Endothelial cell of umbilical vein (primary cell): ENCODE measurements at regions of chr13 and their contacts with region 1.

Region 1: GRCh38 chr13:59531571-59532091 is 632.1 kb downstream of the DIAPH3 start:
- DNase-seq: peak; percentile 98
- H3K4me3 ChIP-seq: no peak overlapping the region
- H3K27ac ChIP-seq: peak overlapping the region; percentile 73
- H3K4me1 ChIP-seq: peaks cover 40% of the 10 kb centered on the region
- H3K27me3 ChIP-seq: no peaks in the 10 kb centered on the region
- CTCF ChIP-seq: no peak
- POLR2A ChIP-seq: peak; percentile 68

Region 2: GRCh38 chr13:59269476-59269875 is 262.2 kb before region 1 on chr13:
- CTCF ChIA-PET with region 1: no interaction called
- POLR2A ChIA-PET with region 1: no interaction called
- dilution Hi-C with region 1: no loop called
- intact Hi-C with region 1: loop called (anchors 1 kb)
- DNase-seq: no peak
- H3K4me3 ChIP-seq: no peak overlapping the region
- H3K27ac ChIP-seq: no peak overlapping the region
- H3K4me1 ChIP-seq: peaks cover 24% of the 10 kb centered on the region
- H3K27me3 ChIP-seq: no peaks in the 10 kb centered on the region
- CTCF ChIP-seq: no peak
- POLR2A ChIP-seq: no peak

Region 3: DNA sequence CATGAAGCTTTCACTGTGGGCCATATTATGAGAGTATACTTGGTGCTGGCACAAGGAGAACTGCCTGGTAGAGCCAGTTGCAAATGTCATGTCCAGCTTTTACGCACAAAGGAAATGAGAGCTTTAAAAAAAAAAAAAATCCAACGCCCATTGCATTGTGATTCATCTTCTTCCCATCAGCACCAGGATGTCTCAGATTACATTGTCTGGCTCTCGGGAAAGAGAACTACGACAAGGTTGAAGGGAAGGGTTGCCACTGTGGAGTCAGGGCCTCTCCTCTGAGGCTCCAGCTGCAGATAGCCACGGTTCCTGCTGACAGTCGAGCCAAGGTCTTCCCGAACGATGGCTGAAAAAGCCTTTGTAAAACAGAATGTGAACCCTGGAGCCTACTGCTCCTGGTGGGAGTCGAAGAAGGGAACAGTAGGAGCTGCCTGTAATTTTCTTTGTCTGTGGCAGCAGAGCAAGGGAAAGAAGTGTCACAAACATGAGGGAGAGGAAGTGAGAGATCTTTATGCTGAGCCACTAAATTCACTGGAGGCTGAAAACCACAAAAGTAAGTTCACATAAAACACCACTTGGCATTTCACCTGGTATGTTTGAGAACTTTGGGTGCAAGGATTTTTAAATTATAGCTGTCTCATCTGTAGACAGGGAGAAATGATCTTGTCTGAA is 72.6 kb before region 1 on chr13:
- CTCF ChIA-PET with region 1: interaction called, 9 read pairs
- POLR2A ChIA-PET with region 1: interaction called, 5 read pairs
- dilution Hi-C with region 1: no loop called
- intact Hi-C with region 1: loop called (anchors 1 kb)
- DNase-seq: peak; percentile 91
- H3K4me3 ChIP-seq: peak overlapping the region in 1 of 3 experiments; percentile 8
- H3K27ac ChIP-seq: peak overlapping the region; percentile 87
- H3K4me1 ChIP-seq: peaks cover 36% of the 10 kb centered on the region
- H3K27me3 ChIP-seq: no peaks in the 10 kb centered on the region
- CTCF ChIP-seq: no peak
- POLR2A ChIP-seq: no peak

Region 4: GRCh38 chr13:59494560-59494970 is 37.1 kb before region 1 on chr13:
- CTCF ChIA-PET with region 1: interaction called, 15 read pairs
- POLR2A ChIA-PET with region 1: interaction called, 6 read pairs
- dilution Hi-C with region 1: no loop called
- intact Hi-C with region 1: loop called (anchors 1 kb)
- DNase-seq: peak; percentile 93
- H3K4me3 ChIP-seq: no peak overlapping the region
- H3K27ac ChIP-seq: peak overlapping the region; percentile 75
- H3K4me1 ChIP-seq: peaks cover 70% of the 10 kb centered on the region
- H3K27me3 ChIP-seq: no peaks in the 10 kb centered on the region
- CTCF ChIP-seq: no peak
- POLR2A ChIP-seq: no peak

Region 5: GRCh38 chr13:59607780-59608233 is 76.2 kb after region 1 on chr13:
- CTCF ChIA-PET with region 1: no interaction called
- POLR2A ChIA-PET with region 1: no interaction called
- dilution Hi-C with region 1: no loop called
- intact Hi-C with region 1: no loop called
- DNase-seq: no peak
- H3K4me3 ChIP-seq: no peak overlapping the region
- H3K27ac ChIP-seq: no peak overlapping the region
- H3K4me1 ChIP-seq: no peaks in the 10 kb centered on the region
- H3K27me3 ChIP-seq: no peaks in the 10 kb centered on the region
- CTCF ChIP-seq: no peak
- POLR2A ChIP-seq: no peak

Region 6: GRCh38 chr13:59666504-59666903 is 134.9 kb after region 1 on chr13:
- CTCF ChIA-PET with region 1: interaction called, 8 read pairs
- POLR2A ChIA-PET with region 1: no interaction called
- dilution Hi-C with region 1: no loop called
- intact Hi-C with region 1: loop called (anchors 1 kb)
- DNase-seq: peak; percentile 93
- H3K4me3 ChIP-seq: peak overlapping the region in 1 of 3 experiments; percentile 3
- H3K27ac ChIP-seq: peak overlapping the region; percentile 69
- H3K4me1 ChIP-seq: peaks cover 16% of the 10 kb centered on the region
- H3K27me3 ChIP-seq: no peaks in the 10 kb centered on the region
- CTCF ChIP-seq: no peak
- POLR2A ChIP-seq: no peak

Region 7: DNA sequence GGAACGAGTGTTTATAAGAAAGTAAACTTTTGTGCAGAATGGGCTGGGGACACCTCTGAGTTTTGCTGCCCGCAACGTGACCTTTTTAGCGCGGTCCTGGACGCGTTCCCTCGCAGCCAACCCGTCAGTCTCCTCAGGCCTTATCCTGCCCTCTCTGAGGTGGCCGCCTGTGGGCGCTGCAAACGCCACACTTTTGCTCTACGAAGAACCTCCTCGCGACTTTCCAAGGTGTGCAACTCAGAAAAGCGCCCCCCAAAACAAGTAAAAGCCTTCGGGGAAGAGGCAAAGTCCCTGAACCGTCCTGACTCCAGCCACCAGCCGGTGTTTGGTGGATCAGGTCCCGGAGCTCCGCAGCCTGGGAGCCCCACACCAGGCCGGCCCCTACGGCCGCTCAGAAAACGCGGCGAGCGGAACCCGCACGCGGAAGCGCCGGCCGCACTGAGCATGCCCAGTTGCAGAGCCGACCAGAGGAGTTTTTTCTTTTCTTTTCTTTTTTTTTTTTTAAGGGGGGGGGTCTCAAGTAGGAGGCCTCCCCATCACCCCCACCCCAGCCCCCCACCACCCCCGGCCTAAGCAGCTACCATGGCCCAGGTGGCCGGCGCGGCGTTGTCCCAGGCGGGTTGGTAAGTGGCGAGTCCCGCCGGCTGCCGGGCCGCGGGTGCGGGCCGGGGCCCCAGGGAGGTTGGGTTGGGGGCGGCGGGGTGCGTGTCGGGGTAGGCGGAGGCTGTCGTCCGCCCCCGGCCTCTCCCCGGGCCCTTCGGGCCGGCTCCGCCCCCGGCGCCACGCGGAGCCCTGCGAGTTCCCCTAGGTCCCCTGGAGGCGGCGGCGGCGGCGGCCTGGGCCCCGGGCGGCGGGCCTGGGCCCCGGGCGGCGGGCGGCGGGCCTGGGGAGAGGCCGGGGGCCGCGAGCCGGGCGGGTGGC is 865.4 kb after region 1 on chr13 and contains the start of gene TDRD3:
- CTCF ChIA-PET with region 1: no interaction called
- POLR2A ChIA-PET with region 1: no interaction called
- dilution Hi-C with region 1: no loop called
- intact Hi-C with region 1: loop called (anchors 5 kb)
- DNase-seq: peak; percentile 90
- H3K4me3 ChIP-seq: peak within 1 kb of the TSS; percentile 76 to 97 (median 94)
- H3K27ac ChIP-seq: peak within 1 kb of the TSS; percentile 93
- H3K4me1 ChIP-seq: peaks cover 23% of the 10 kb centered on the region
- H3K27me3 ChIP-seq: no peaks in the 10 kb centered on the region
- CTCF ChIP-seq: peak; percentile 86 to 94
- POLR2A ChIP-seq: peak; percentile 70
- total RNA-seq, gene TDRD3: 16.3 and 18.5 TPM in 2 replicates